ENCODE measurements at regions of chr2 and their contacts with region 1.

Region 1: GRCh38 chr2:152585830-152586484 is 131.3 kb downstream of the PRPF40A start:
- DNase-seq: peak; percentile 84
- H3K4me3 ChIP-seq: no peak overlapping the region
- H3K27ac ChIP-seq: no peak overlapping the region
- H3K4me1 ChIP-seq: peaks cover 46% of the 10 kb centered on the region
- H3K27me3 ChIP-seq: no peaks in the 10 kb centered on the region
- CTCF ChIP-seq: no peak

Region 2: GRCh38 chr2:151024696-151025251 is 1561.2 kb before region 1 on chr2:
- CTCF ChIA-PET with region 1: no interaction called
- POLR2A ChIA-PET with region 1: interaction called, 22 read pairs
- intact Hi-C with region 1: no loop called
- DNase-seq: no peak
- H3K4me3 ChIP-seq: no peak overlapping the region
- H3K27ac ChIP-seq: no peak overlapping the region
- H3K4me1 ChIP-seq: no peaks in the 10 kb centered on the region
- H3K27me3 ChIP-seq: no peaks in the 10 kb centered on the region
- CTCF ChIP-seq: no peak

Region 3: DNA sequence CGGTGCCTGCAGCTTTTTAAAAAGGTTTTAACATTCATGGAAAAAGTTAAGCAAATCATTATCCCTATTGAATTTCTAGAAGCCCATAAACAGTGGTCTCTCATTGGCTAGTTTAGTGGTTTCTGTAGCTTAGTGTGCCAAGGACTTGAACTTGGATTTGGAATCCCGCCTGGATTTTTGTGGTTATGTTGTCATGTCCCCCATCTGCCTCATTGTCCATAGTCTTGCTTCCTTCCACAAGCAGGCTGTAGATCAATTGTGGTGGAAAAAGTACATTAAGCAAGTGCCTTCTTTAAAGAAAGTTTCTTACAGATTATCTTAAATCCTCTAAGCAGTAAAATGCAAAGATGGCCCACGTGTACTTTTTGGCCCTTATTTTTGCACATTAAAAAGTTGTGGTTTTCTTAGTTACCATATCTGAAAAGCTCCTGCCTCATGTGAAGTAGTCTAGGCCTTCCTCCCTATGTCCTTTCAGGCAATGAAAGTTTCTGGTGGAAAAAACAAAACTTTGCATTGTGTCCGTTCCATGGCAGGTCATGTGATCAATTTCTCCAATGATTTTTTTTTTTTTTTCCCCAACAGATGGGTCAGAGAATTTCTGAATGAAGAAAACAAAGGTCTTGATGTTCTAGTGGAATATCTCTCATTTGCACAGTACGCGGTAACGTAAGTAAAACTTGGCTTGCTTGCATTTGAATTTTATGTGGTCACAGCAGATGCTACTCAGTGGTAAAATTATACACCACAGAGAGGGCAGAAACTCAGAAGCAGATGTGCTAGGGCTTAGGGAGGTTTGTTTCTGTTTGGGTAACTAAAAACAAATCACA is 27.6 kb before region 1 on chr2:
- CTCF ChIA-PET with region 1: no interaction called
- POLR2A ChIA-PET with region 1: interaction called, 10 read pairs
- intact Hi-C with region 1: no loop called
- DNase-seq: no peak
- H3K4me3 ChIP-seq: no peak overlapping the region
- H3K27ac ChIP-seq: peak overlapping the region; percentile 20
- H3K4me1 ChIP-seq: peaks cover 21% of the 10 kb centered on the region
- H3K27me3 ChIP-seq: no peaks in the 10 kb centered on the region
- CTCF ChIP-seq: no peak

Region 4: GRCh38 chr2:152620208-152620607 is 34.3 kb after region 1 on chr2:
- CTCF ChIA-PET with region 1: no interaction called
- POLR2A ChIA-PET with region 1: no interaction called
- intact Hi-C with region 1: no loop called
- DNase-seq: no peak
- H3K4me3 ChIP-seq: no peak overlapping the region
- H3K27ac ChIP-seq: no peak overlapping the region
- H3K4me1 ChIP-seq: no peaks in the 10 kb centered on the region
- H3K27me3 ChIP-seq: no peaks in the 10 kb centered on the region
- CTCF ChIP-seq: no peak

Region 5: DNA sequence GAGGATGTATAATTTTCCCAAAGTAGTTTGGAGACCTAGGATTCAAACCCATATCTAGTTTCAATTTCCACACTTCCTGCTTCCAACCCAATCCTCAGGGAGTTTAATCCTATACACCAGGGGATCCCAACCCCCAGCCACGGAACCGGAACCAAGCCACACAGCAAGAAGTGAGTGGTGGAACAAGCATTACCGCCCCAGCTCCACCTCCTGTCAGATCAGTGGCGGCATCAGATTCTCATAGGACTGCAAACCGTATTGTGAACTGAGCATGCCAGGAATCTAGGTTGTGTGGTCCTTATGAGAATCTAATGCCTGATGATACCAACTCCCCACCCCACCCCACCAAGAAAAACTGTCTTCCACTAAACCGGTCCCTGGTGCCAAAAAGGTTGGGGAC is 78.7 kb after region 1 on chr2:
- CTCF ChIA-PET with region 1: no interaction called
- POLR2A ChIA-PET with region 1: interaction called, 11 read pairs
- intact Hi-C with region 1: no loop called
- DNase-seq: no peak
- H3K4me3 ChIP-seq: no peak overlapping the region
- H3K27ac ChIP-seq: no peak overlapping the region
- H3K4me1 ChIP-seq: no peaks in the 10 kb centered on the region
- H3K27me3 ChIP-seq: no peaks in the 10 kb centered on the region
- CTCF ChIP-seq: no peak

Measured in A673 (cell line).